Activated CD4-positive, alpha-beta T cell treated with anti-CD3 and anti-CD28 coated beads for 36 hours (primary cell): ENCODE measurements at regions of chr1 and their contacts with region 1.

Region 1: GRCh38 chr1:230167419-230167852 is 100.4 kb downstream of the GALNT2 start:
- DNase-seq: peak; percentile 59
- ATAC-seq: peak; percentile 66
- H3K4me3 Mint-ChIP-seq: no peak overlapping the region
- H3K27ac Mint-ChIP-seq: peak overlapping the region; percentile 40
- H3K4me1 Mint-ChIP-seq: peaks cover 43% of the 10 kb centered on the region
- H3K27me3 Mint-ChIP-seq: no peaks in the 10 kb centered on the region

Region 2: DNA sequence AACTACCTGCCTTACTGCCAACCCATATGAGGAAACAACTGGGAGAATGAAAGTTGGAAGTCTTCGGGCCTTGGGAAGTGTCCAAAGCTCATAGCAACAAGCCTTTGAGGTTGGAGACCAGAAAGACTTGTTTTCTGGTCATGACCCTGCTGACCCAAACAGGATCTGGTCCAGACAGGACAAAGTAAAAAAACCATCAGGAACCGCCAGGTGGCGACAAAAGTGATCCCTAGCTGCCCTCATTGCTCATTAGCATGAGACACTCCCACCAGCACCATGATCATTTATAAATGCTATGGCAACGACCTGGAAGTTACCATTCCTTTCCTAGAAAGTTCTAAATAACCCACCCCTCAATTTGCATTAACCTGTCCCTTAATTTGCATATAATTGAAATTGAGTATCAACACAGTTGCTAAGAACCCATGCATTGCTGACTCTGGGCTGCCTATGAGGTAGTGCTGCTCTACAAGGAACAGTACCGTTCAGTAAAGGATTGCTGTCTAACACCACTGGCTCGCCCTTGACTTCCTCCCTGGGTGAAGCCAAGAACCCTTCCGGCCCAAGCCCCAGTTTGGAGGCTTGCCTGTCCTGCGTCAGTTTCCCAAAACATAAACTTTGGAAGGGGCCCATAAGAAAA is 452.4 kb before region 1 on chr1:
- CTCF ChIA-PET with region 1: no interaction called
- POLR2A ChIA-PET with region 1: no interaction called
- intact Hi-C with region 1: loop called in 1 of 2 experiments (anchors 5 kb)
- DNase-seq: peak; percentile 60
- ATAC-seq: peak; percentile 33
- H3K4me3 Mint-ChIP-seq: no peak overlapping the region
- H3K27ac Mint-ChIP-seq: no peak overlapping the region
- H3K4me1 Mint-ChIP-seq: no peaks in the 10 kb centered on the region
- H3K27me3 Mint-ChIP-seq: peaks cover 3% of the 10 kb centered on the region

Region 3: DNA sequence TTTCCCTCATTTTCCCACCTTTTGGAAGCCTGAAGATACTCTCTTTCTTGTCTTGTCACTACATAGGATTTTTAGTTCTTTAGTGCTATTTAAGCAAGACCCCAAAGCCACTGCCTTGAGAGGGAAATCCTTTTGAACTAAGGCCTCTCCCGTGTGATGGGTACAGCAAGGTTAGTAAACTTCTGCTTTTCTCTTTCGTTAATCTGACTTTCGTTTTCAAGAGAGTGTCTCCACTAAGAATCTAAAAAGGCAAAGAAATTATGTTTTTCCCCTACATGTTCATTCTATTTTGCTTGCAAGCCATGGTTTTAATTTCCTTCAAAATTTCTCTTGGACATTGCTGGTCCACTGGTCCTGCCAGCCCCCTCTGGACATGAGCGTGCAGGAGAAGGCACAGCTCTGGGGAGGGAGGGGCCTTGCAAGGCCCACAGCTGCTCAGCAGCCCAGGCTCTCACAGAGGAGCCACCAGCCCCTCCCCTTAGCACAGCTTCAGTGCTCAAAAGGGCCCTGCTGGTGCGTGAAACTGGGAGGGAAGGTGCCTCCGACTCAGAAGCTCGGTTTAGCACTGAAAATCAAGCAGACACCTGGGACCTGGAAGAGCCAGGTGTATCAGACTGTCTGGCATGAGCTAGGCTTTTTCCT is 311.3 kb before region 1 on chr1:
- CTCF ChIA-PET with region 1: no interaction called
- POLR2A ChIA-PET with region 1: no interaction called
- intact Hi-C with region 1: loop called in 1 of 2 experiments (anchors 10 kb)
- DNase-seq: peak; percentile 36
- ATAC-seq: peak; percentile 78
- H3K4me3 Mint-ChIP-seq: peak overlapping the region; percentile 59
- H3K27ac Mint-ChIP-seq: no peak overlapping the region
- H3K4me1 Mint-ChIP-seq: peaks cover 12% of the 10 kb centered on the region
- H3K27me3 Mint-ChIP-seq: no peaks in the 10 kb centered on the region

Region 4: DNA sequence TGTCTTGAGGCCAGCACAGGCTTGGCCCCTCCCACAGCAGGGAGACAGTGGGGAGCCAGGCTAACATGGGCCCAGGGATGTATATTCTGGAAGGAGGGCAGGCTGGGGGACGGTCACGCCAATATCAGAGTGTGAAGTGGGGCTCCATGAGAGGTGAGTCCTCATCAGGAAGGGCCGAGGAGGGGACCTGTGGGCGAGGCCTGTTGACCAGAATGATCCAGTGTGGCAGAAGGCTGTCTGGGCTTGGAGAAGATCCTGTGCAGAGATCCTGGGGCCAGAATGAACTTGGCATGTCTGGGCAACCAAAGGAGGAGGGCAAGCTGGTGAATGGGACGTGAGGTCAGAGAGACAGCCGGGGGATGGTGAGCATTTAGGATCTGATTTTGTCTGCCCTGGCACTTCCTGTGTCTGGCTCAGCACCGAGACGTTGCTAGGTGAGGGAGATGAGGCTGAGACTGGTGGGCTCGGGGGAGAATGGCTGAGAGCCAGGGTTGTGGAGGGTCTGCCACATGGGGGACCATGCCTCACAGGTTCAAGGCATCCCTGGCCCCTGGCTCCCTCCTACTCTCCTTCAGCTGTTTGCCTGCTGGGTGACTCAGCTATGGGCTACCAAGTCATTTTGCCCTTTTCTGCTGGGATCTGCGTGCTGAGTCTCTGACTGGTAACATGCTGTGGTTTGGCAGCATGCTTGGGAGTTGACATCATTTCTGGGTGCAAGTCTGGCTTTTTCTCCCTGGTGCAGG is 83.1 kb before region 1 on chr1:
- CTCF ChIA-PET with region 1: interaction called, 3 read pairs
- POLR2A ChIA-PET with region 1: no interaction called
- intact Hi-C with region 1: loop called in 1 of 2 experiments (anchors 1 kb)
- DNase-seq: peak; percentile 89
- ATAC-seq: peak; percentile 97
- H3K4me3 Mint-ChIP-seq: peak overlapping the region; percentile 11
- H3K27ac Mint-ChIP-seq: peak overlapping the region; percentile 87
- H3K4me1 Mint-ChIP-seq: peaks cover 74% of the 10 kb centered on the region
- H3K27me3 Mint-ChIP-seq: no peaks in the 10 kb centered on the region

Region 5: DNA sequence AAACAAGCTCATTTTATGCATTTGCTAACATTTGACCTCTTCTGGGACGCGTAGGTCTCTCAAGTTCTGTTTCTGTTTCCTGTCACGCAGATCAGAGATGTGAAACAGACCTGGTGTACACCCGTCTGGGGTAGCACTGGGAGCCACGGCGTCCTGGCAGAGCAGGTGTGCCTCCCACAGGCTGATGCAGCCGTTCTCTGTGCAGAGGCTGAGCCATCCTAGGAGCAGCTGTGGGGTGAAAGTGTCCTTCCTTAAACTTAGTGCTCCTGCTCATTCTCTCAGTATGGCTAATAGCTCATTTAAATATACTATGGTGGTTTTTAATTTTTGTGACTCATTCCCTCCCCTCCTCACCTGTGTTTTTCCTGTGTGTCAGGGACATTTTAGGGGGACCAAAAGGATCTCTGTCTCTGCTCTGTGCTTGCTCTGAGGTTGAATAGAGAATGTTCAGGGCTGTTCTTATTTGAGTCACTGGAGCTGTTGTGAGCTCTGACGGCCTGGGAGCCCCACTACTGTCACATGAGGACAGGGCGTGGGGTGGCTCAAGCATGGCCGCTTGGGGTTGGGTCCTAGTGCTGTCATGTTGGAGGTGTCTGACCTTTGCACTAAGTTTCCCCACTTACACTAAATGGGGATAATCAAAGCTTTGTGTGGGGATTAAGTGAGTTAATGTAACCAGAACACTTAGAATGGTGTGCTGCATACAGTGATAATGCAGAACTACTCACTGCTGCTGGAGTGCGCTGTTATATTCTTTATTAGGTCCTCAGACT is 57.4 kb before region 1 on chr1:
- CTCF ChIA-PET with region 1: interaction called, 3 read pairs
- POLR2A ChIA-PET with region 1: no interaction called
- intact Hi-C with region 1: loop called (anchors 2 to 5 kb)
- DNase-seq: peak; percentile 94
- ATAC-seq: peak; percentile 91
- H3K4me3 Mint-ChIP-seq: peak overlapping the region; percentile 48
- H3K27ac Mint-ChIP-seq: peak overlapping the region; percentile 94
- H3K4me1 Mint-ChIP-seq: peaks cover 88% of the 10 kb centered on the region
- H3K27me3 Mint-ChIP-seq: no peaks in the 10 kb centered on the region

Region 6: GRCh38 chr1:230310381-230311163 is 143.1 kb after region 1 on chr1:
- CTCF ChIA-PET with region 1: no interaction called
- POLR2A ChIA-PET with region 1: no interaction called
- intact Hi-C with region 1: loop called in 1 of 2 experiments (anchors 5 kb)
- DNase-seq: peak; percentile 82
- ATAC-seq: peak; percentile 48
- H3K4me3 Mint-ChIP-seq: no peak overlapping the region
- H3K27ac Mint-ChIP-seq: no peak overlapping the region
- H3K4me1 Mint-ChIP-seq: peaks cover 15% of the 10 kb centered on the region
- H3K27me3 Mint-ChIP-seq: peaks cover 4% of the 10 kb centered on the region